ENCODE measurements at regions of chr17 and their contacts with region 1.

Region 1: DNA sequence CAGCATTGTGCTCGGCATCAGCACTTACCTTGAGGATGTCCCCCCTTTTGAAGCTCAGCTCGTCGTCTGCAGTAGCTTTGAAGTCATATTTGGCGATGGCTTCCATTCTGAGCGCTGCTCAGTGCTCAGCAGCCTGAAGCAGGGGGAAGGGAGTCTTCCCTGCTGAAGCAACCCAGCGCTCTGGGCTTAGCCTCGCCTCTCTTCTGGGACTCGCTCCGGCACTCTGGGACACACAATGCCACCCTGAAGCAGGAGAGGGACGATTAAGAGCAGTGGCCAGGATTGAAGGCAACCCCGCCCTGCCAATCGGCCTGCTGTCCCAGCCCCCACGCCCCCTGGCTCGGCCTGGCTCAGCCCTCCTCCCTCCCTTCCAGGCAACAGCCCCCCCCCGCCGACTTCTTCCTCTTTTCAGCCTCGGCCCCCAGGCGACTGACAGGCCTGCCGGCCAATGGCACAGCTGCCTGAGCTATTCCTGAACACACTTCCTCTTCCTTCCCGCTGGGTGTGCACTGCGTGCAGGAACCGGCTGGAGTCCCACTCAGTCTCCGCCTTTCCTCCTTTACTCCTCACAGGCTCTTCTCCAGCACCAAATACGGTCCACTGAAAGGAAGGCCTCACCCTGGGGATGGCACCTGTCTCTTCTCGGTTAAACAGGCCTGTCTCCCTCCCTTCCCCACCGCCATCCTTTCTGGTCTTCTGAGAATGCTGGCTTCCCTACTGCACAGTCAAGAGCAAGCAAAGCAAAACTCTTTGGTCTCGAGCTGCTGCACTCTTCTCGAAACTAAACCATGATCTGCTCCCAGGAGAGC is 11.8 kb downstream of the GRB2 start:
- DNase-seq: peak; percentile 99
- H3K4me3 ChIP-seq: peak overlapping the region; percentile 67
- H3K4me3 Mint-ChIP-seq: peak overlapping the region; percentile 91
- H3K27ac Mint-ChIP-seq: peak overlapping the region; percentile 63
- H3K4me1 ChIP-seq: peaks cover 37% of the 10 kb centered on the region
- H3K4me1 Mint-ChIP-seq: peaks cover 22% of the 10 kb centered on the region
- H3K27me3 ChIP-seq: no peaks in the 10 kb centered on the region
- H3K27me3 Mint-ChIP-seq: no peaks in the 10 kb centered on the region
- CTCF ChIP-seq: peak; percentile 5 to 36

Region 2: GRCh38 chr17:75319904-75320691 is 73.6 kb before region 1 on chr17:
- CTCF ChIA-PET with region 1: interaction called, 12 read pairs
- POLR2A ChIA-PET with region 1: no interaction called
- intact Hi-C with region 1: no loop called
- DNase-seq: no peak
- H3K4me3 ChIP-seq: no peak overlapping the region
- H3K4me3 Mint-ChIP-seq: no peak overlapping the region
- H3K27ac Mint-ChIP-seq: no peak overlapping the region
- H3K4me1 ChIP-seq: no peaks in the 10 kb centered on the region
- H3K4me1 Mint-ChIP-seq: no peaks in the 10 kb centered on the region
- H3K27me3 ChIP-seq: no peaks in the 10 kb centered on the region
- H3K27me3 Mint-ChIP-seq: no peaks in the 10 kb centered on the region
- CTCF ChIP-seq: no peak

Region 3: GRCh38 chr17:75364078-75364477 is 29.6 kb before region 1 on chr17:
- CTCF ChIA-PET with region 1: no interaction called
- POLR2A ChIA-PET with region 1: interaction called, 5 read pairs
- intact Hi-C with region 1: loop called (anchors 1 kb)
- DNase-seq: no peak
- H3K4me3 ChIP-seq: no peak overlapping the region
- H3K4me3 Mint-ChIP-seq: no peak overlapping the region
- H3K27ac Mint-ChIP-seq: no peak overlapping the region
- H3K4me1 ChIP-seq: peaks cover 3% of the 10 kb centered on the region; the same call in 1 of the 2 replicates
- H3K4me1 Mint-ChIP-seq: peaks cover 17% of the 10 kb centered on the region
- H3K27me3 ChIP-seq: no peaks in the 10 kb centered on the region
- H3K27me3 Mint-ChIP-seq: no peaks in the 10 kb centered on the region
- CTCF ChIP-seq: no peak

Region 4: GRCh38 chr17:75380315-75380714 is 13.4 kb before region 1 on chr17:
- CTCF ChIA-PET with region 1: interaction called, 8 read pairs
- POLR2A ChIA-PET with region 1: interaction called, 9 read pairs
- intact Hi-C with region 1: loop called (anchors 1 kb)
- DNase-seq: no peak
- H3K4me3 ChIP-seq: no peak overlapping the region
- H3K4me3 Mint-ChIP-seq: no peak overlapping the region
- H3K27ac Mint-ChIP-seq: no peak overlapping the region
- H3K4me1 ChIP-seq: peaks cover 19% of the 10 kb centered on the region
- H3K4me1 Mint-ChIP-seq: peaks cover 18% of the 10 kb centered on the region
- H3K27me3 ChIP-seq: no peaks in the 10 kb centered on the region
- H3K27me3 Mint-ChIP-seq: no peaks in the 10 kb centered on the region
- CTCF ChIP-seq: no peak

Region 5: DNA sequence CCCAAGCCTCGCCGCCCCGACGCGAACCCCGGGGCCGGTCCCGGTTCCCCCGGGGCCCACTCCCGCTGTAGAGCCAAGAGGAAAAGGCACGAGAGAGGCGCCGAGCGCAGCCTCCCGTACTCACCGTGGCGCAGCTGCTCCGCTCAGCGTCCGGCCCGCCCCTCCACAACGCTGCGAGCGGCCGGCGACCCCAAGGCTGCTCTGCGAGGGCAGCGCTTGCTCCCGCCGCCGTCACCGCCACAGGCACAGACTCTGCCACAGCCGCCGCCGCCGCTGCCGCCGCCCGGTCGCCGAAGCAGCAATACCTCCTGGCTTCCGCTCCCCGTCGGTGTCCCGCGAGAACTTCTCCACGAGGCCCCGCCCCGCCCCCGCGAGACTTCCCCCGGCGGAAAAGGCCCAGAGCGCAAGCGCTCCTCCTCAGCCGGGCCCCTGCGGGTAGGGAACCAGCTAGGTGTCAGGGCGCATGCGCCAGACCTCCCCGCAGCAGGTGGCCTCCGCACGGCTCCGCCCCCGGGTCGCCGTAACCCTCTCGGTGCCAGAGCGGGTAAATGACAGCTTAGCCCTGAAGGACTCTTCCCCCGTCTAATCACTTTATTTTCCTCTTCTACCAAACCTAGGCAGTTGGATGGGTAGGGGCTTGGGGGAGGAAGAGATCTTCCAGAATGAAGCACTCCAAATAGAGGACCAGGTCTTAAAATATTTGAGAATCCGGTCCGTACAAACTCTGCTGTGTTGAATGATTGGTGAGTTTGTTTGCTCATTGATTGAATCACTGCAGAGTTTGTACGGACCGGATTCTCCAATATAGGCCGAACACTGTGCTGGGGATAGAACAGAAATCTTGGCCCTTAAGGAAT is 11.9 kb after region 1 on chr17 and contains the start of gene GRB2:
- CTCF ChIA-PET with region 1: interaction called, 18 read pairs
- POLR2A ChIA-PET with region 1: interaction called, 18 read pairs
- intact Hi-C with region 1: no loop called
- DNase-seq: peak; percentile 99 to 100
- H3K4me3 ChIP-seq: peak within 1 kb of the TSS; percentile 70
- H3K4me3 Mint-ChIP-seq: peak within 1 kb of the TSS; percentile 78
- H3K27ac Mint-ChIP-seq: peak within 1 kb of the TSS; percentile 71
- H3K4me1 ChIP-seq: 0 out of 2 replicates have a peak, but pooled peaks cover 6% of the 10 kb centered on the region
- H3K4me1 Mint-ChIP-seq: peaks cover 12% of the 10 kb centered on the region
- H3K27me3 ChIP-seq: no peaks in the 10 kb centered on the region
- H3K27me3 Mint-ChIP-seq: no peaks in the 10 kb centered on the region
- CTCF ChIP-seq: no peak
- total RNA-seq, gene GRB2: 113 and 115 TPM in 2 replicates